ENCODE measurements at regions of chr20 and their contacts with region 1.

Region 1: DNA sequence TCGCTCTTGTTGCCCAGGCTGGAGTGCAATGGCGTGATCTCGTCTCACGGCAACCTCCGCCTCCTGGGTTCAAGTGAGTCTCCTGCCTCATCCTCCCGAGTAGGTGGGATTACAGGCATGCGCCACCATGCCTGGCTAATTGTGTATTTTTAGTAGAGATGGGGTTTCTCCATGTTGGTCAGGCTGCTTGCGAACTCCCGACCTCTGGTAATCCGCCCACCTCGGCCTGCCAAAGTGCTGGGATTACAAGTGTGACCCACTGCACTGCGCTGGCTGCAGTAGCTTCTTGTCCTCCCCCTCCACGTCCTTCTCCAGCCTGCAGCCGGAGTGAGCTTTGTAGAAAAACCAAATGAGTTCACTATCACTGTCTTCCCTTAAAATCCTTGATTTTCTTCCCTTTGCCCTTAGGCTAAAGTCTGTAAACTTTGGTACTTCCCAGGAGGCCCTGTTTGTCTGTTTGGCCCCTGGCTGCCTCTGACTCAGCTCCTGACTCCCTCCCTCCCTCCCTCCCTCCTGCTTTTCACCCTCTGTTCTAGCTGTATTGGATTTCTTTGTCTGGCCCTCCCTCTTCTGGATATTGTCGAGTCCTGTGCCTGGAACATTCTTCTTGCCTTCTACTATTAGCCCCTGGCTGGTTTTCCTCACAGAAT is 12.9 kb downstream of the PARD6B start:
- DNase-seq: peak; percentile 68 to 92
- H3K4me3 ChIP-seq: no peak overlapping the region
- H3K27ac ChIP-seq: peak overlapping the region; percentile 77 to 91 (median 87)
- H3K4me1 ChIP-seq: peaks cover 38 to 97% (median 78%) of the 10 kb centered on the region in 4 donors
- H3K27me3 ChIP-seq: no peaks in the 10 kb centered on the region
- CTCF ChIP-seq: peak in 4 of 7 experiments; percentile 7 to 54 (median 33)
- EP300 ChIP-seq: no peak
- POLR2A ChIP-seq: no peak

Region 2: DNA sequence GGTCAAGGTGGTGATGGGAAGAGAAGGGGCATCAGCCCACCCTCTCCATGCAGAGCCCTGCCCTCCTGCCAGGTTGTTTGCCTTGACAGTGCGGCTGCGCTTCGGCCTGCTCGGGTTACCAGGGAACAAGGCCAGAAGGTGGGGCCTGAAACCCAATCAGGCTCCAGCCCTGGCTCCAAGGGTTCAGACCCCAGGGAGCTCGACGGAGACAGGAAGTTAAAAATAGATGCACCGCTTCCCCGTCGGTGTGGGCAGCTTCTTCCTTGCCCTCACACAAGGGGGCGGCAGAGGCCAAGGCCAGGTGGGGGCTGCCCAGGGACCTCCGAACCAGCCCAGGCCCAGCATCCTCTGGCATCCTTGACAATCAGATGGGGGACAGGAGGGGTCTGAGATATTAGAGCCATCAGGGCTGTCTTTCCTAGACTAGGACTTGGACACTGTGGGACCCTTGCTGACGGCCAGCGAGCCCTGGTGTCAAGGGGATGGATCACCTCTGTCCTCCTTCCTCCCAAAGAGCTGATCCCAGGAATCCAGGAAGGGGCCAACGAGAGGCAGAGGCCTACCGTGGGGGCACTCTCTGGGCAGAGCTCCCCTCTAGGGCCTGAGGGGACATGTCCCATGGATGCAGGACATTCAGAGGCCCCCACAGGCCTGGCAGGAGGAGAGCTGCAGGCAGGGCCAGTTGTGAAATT is 118.1 kb before region 1 on chr20:
- intact Hi-C with region 1: loop called (anchors 10 kb)
- DNase-seq: peak; percentile 51 to 68
- H3K4me3 ChIP-seq: no peak overlapping the region
- H3K27ac ChIP-seq: peak overlapping the region in 4 of 5 donors; percentile 23 to 64 (median 36)
- H3K4me1 ChIP-seq: peaks cover 0 to 26% (median 20%) of the 10 kb centered on the region in 4 donors
- H3K27me3 ChIP-seq: no peaks in the 10 kb centered on the region
- CTCF ChIP-seq: peak in 5 of 7 experiments; percentile 18 to 63 (median 49)
- EP300 ChIP-seq: no peak
- POLR2A ChIP-seq: no peak

Region 3: GRCh38 chr20:50848341-50848808 is 104.1 kb after region 1 on chr20:
- intact Hi-C with region 1: no loop called
- DNase-seq: peak; percentile 52 to 64
- H3K4me3 ChIP-seq: no peak overlapping the region
- H3K27ac ChIP-seq: peak overlapping the region in 4 of 5 donors; percentile 30 to 57 (median 48)
- H3K4me1 ChIP-seq: peaks cover 13 to 32% (median 20%) of the 10 kb centered on the region in 4 donors
- H3K27me3 ChIP-seq: no peaks in the 10 kb centered on the region
- CTCF ChIP-seq: no peak
- EP300 ChIP-seq: no peak
- POLR2A ChIP-seq: no peak